PC-9 (cell line): ENCODE measurements at regions of chr4 and their contacts with region 1.

Region 1: GRCh38 chr4:170259631-170260153 is 169.9 kb upstream of the AADAT start:
- DNase-seq: peak; percentile 63 to 70
- H3K4me3 ChIP-seq: no peak overlapping the region
- H3K27ac ChIP-seq: no peak overlapping the region
- H3K4me1 ChIP-seq: no peaks in the 10 kb centered on the region
- H3K27me3 ChIP-seq: no peaks in the 10 kb centered on the region
- CTCF ChIP-seq: peak; percentile 89

Region 2: GRCh38 chr4:170138580-170139194 is 121.0 kb before region 1 on chr4:
- CTCF ChIA-PET with region 1: no interaction called
- POLR2A ChIA-PET with region 1: no interaction called
- intact Hi-C with region 1: loop called (anchors 1 kb)
- DNase-seq: peak in 1 of 2 experiments; percentile 57
- H3K4me3 ChIP-seq: no peak overlapping the region
- H3K27ac ChIP-seq: no peak overlapping the region
- H3K4me1 ChIP-seq: no peaks in the 10 kb centered on the region
- H3K27me3 ChIP-seq: no peaks in the 10 kb centered on the region
- CTCF ChIP-seq: peak; percentile 77

Region 3: DNA sequence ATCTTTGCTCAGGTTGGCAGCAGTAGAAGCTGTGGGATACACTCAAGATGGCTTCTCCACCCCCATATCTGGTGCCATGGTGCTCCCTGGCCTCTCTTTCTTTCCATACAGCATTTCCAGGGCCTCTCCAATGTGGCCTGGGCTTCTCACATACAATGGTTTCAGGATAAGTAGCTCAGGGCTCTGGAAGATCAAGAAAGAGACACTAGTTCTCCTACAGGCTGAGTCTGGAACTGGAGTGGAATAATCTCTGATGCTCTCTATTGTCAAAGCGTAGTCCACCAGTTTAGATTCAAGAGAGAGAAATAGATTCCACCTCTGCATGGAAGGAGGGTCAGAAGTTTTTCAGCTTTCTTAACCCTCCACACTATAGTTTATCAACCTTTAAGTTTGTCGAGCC is 31.8 kb before region 1 on chr4:
- CTCF ChIA-PET with region 1: no interaction called
- POLR2A ChIA-PET with region 1: no interaction called
- intact Hi-C with region 1: no loop called
- DNase-seq: no peak
- H3K4me3 ChIP-seq: no peak overlapping the region
- H3K27ac ChIP-seq: no peak overlapping the region
- H3K4me1 ChIP-seq: no peaks in the 10 kb centered on the region
- H3K27me3 ChIP-seq: no peaks in the 10 kb centered on the region
- CTCF ChIP-seq: no peak

Region 4: GRCh38 chr4:170391066-170391740 is 131.5 kb after region 1 on chr4:
- CTCF ChIA-PET with region 1: no interaction called
- POLR2A ChIA-PET with region 1: no interaction called
- intact Hi-C with region 1: no loop called
- DNase-seq: no peak
- H3K4me3 ChIP-seq: no peak overlapping the region
- H3K27ac ChIP-seq: no peak overlapping the region
- H3K4me1 ChIP-seq: no peaks in the 10 kb centered on the region
- H3K27me3 ChIP-seq: no peaks in the 10 kb centered on the region
- CTCF ChIP-seq: no peak

Region 5: GRCh38 chr4:170853422-170854021 is 593.8 kb after region 1 on chr4:
- CTCF ChIA-PET with region 1: no interaction called
- POLR2A ChIA-PET with region 1: no interaction called
- intact Hi-C with region 1: loop called (anchors 1 kb)
- DNase-seq: peak in 1 of 2 experiments; percentile 48
- H3K4me3 ChIP-seq: no peak overlapping the region
- H3K27ac ChIP-seq: no peak overlapping the region
- H3K4me1 ChIP-seq: no peaks in the 10 kb centered on the region
- H3K27me3 ChIP-seq: no peaks in the 10 kb centered on the region
- CTCF ChIP-seq: peak; percentile 74

Region 6: DNA sequence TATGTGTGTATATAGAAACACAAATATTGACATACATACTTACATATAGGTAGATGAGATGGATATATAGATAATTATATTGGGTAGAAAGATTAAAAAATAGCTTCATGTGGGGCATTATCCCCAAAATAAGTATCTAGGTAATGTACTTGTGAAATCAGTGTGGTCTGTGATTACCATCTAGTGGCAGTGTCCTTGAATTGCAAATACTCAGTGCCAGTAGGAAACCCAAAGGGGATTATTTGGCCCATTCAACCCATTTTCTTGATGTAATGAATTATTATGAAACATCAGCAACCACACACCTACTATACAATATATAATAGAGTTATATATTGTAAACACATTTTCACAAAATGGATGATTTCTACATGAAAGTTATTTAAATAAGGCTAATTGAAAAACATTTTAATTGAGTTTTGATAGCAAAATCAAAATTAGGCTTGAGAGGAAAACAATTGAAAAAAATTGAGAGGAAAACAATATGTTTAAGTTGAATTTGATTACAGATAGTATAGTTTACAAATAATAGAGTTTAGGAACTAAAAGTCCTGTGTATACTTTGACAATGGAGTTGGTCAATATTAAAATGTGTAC is 1942.9 kb after region 1 on chr4:
- CTCF ChIA-PET with region 1: interaction called, 7 read pairs
- POLR2A ChIA-PET with region 1: no interaction called
- intact Hi-C with region 1: loop called (anchors 2 kb)
- DNase-seq: no peak
- H3K4me3 ChIP-seq: no peak overlapping the region
- H3K27ac ChIP-seq: no peak overlapping the region
- H3K4me1 ChIP-seq: no peaks in the 10 kb centered on the region
- H3K27me3 ChIP-seq: no peaks in the 10 kb centered on the region
- CTCF ChIP-seq: peak; percentile 67